CD8-positive, alpha-beta memory T cell (primary cell): ENCODE measurements at regions of chr3 and their contacts with region 1.

Region 1: GRCh38 chr3:107235928-107236315 is 141.3 kb upstream of the CCDC54 start:
- DNase-seq: peak in 4 of 5 donors; percentile 28 to 64 (median 58)
- H3K4me3 ChIP-seq: no peak overlapping the region
- H3K4me3 Mint-ChIP-seq: peak overlapping the region in 6 of 7 donors; percentile 15 to 58 (median 40)
- H3K27ac ChIP-seq: no peak overlapping the region
- H3K27ac Mint-ChIP-seq: no peak overlapping the region
- H3K4me1 ChIP-seq: peaks cover 7% of the 10 kb centered on the region
- H3K4me1 Mint-ChIP-seq: peaks cover 9 to 21% (median 17%) of the 10 kb centered on the region in 3 donors
- H3K27me3 ChIP-seq: no peaks in the 10 kb centered on the region
- H3K27me3 Mint-ChIP-seq: peaks cover 0 to 1% of the 10 kb centered on the region in 2 donors

Region 2: DNA sequence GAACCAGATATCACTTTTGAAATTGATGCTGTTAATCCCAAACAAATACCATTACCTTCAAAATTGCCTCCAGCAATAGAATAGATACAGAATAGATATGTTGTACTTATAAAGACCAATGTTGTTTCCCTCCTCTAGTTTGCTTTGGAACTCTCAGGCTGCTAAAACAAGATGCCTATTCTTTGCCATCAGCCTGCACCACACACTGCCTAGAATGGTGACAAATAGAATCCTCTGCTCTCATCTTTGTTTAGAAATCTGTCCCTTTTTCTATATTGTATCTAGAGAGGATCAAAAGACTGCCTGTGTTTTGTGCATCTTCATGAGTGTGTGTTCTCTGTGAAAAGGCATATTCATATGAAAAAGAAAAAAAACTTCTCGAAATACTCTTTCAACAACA is 207.8 kb before region 1 on chr3:
- CTCF ChIA-PET with region 1: no interaction called
- POLR2A ChIA-PET with region 1: no interaction called
- DNase-seq: no peak
- H3K4me3 ChIP-seq: no peak overlapping the region
- H3K4me3 Mint-ChIP-seq: no peak overlapping the region
- H3K27ac ChIP-seq: no peak overlapping the region
- H3K27ac Mint-ChIP-seq: no peak overlapping the region
- H3K4me1 ChIP-seq: no peaks in the 10 kb centered on the region
- H3K4me1 Mint-ChIP-seq: no peaks in the 10 kb centered on the region
- H3K27me3 ChIP-seq: no peaks in the 10 kb centered on the region
- H3K27me3 Mint-ChIP-seq: peaks cover 0 to 2% of the 10 kb centered on the region in 2 donors

Region 3: DNA sequence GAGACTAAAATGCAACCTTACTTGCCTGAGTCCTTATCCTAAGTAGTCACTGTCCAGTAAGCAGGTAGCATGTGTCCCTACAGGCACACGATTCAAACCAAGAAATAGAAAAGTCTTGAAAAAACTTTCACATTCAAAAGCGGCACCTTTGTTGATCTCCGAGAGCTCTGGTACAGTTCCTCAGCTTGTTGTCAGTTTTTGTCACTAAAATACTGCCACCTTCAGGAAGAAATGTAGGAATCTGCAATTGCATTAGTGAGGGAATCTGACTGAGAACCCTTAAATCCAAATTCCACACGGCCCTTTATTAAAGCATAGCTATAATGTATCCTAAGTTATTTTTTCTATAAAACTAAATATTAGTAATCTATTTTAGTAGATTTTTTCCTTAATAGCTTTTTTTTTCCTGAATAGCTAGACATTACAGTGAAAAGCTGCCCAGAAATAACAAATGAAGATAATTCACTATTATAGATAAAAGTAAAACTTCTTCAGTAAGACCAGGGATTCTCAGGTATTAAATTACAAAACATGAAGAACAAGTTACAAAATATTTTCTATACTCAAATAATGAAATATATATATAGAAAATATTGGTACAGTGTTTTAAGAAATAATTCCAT is 185.4 kb after region 1 on chr3:
- CTCF ChIA-PET with region 1: interaction called, 17 read pairs
- POLR2A ChIA-PET with region 1: no interaction called
- DNase-seq: peak in 2 of 5 donors; percentile 35 to 47
- H3K4me3 ChIP-seq: no peak overlapping the region
- H3K4me3 Mint-ChIP-seq: peak overlapping the region in 6 of 7 donors; percentile 44 to 71 (median 60)
- H3K27ac ChIP-seq: no peak overlapping the region
- H3K27ac Mint-ChIP-seq: peak overlapping the region in 1 of 8 donors; percentile 13
- H3K4me1 ChIP-seq: no peaks in the 10 kb centered on the region
- H3K4me1 Mint-ChIP-seq: peaks cover 3 to 4% (median 4%) of the 10 kb centered on the region in 3 donors
- H3K27me3 ChIP-seq: no peaks in the 10 kb centered on the region
- H3K27me3 Mint-ChIP-seq: peaks cover 6 to 15% of the 10 kb centered on the region in 2 donors